Dendritic cell treated with granulocyte-macrophage colony-stimulating factor and Interleukin-4, amounts not matched to agents 40 ng/mL and 50 ng/mL, for 4 days (primary cell): ENCODE measurements at regions of chr6 and their contacts with region 1.

Region 1: GRCh38 chr6:13302751-13303667 is 25.3 kb downstream of the TBC1D7 start:
- H3K4me3 Mint-ChIP-seq: peak overlapping the region; percentile 58
- H3K27ac Mint-ChIP-seq: peak overlapping the region; percentile 88
- H3K4me1 Mint-ChIP-seq: peaks cover 42% of the 10 kb centered on the region
- H3K27me3 Mint-ChIP-seq: peaks cover 20% of the 10 kb centered on the region

Region 2: GRCh38 chr6:13259393-13259792 is 43.6 kb before region 1 on chr6:
- intact Hi-C with region 1: loop called (anchors 5 kb)
- H3K4me3 Mint-ChIP-seq: no peak overlapping the region
- H3K27ac Mint-ChIP-seq: no peak overlapping the region
- H3K4me1 Mint-ChIP-seq: peaks cover 62% of the 10 kb centered on the region
- H3K27me3 Mint-ChIP-seq: peaks cover 15% of the 10 kb centered on the region

Region 3: DNA sequence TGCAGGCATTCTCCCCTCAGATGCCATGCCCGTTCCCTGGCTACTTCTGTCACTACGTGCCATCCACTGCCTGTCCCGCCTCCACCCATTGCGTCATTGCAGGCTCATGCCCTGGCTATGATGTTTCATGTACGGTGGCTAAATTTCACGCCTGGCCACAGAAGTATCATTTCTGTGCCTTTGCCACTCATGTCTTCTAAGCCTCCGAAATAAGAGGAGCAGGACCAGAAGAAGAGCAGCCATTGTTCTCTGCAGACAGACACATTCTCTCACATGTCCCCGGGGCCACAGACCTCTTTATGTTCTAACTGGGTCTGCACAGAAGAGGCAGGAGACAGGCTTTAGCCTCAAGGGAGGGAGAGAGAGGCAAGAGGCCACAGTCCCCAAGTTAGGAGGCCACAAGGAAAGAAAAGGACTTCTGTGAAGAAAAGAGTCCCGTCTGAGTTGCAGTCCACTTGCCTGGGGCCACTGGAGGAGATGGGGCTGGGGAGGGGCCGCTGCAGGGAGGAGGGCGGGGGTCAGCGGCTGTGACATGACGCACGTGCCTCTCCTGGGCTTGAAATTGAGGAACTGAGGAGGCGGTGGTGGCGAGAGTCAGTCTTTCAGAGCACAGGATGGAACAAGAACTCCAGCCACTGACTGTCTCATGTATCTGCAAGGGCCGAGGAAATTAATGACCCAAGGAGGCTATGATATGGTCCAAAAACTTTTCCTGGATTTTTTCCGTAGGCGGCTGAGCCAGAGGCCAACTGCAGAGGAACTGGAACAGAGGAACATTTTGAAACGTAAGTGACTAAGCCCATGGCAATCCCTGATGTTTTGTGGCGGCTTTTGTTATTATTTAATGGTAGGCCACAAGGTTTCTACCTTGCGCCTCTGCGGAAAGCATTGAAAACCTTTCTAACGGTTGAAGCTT is 30.6 kb before region 1 on chr6:
- intact Hi-C with region 1: loop called (anchors 1 kb)
- H3K4me3 Mint-ChIP-seq: peak overlapping the region; percentile 58
- H3K27ac Mint-ChIP-seq: peak overlapping the region; percentile 84
- H3K4me1 Mint-ChIP-seq: peaks cover 61% of the 10 kb centered on the region
- H3K27me3 Mint-ChIP-seq: peaks cover 24% of the 10 kb centered on the region